Heart right ventricle (tissue), 16 donors: ENCODE measurements at regions of chr18 and their contacts with region 1.

Region 1: DNA sequence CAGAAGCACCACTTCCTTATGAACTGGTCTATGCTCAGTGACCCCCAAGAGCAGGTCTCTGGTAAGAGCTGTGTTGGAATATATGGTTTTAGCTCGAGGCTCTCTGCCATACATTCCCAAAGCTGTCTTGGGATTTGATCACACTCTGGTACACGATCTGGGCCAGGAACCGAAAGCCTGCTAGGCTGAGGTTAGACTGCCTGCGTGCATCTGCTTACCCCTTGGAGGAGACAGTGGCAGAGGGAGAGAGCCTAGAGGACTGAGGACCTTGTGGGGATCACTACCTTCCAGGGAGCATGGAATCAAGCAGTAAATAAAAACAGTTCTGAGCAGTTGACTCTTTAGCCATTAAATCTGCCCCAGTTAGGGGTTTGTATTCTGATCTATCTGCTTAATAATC is 63.7 kb downstream of the ZNF532 start:
- DNase-seq: no peak
- ATAC-seq: peak in 6 of 8 donors; percentile 44 to 64 (median 52)
- H3K4me3 ChIP-seq: no peak overlapping the region
- H3K27ac ChIP-seq: peak overlapping the region in 9 of 10 donors; percentile 51 to 83 (median 61)
- H3K4me1 ChIP-seq: peaks cover 2 to 45% (median 32%) of the 10 kb centered on the region in 9 donors
- H3K27me3 ChIP-seq: no peaks in the 10 kb centered on the region
- CTCF ChIP-seq: no peak

Region 2: GRCh38 chr18:58980991-58981390 is 52.6 kb after region 1 on chr18:
- intact Hi-C with region 1: loop called in 1 of 10 experiments (anchors 10 kb)
- DNase-seq: no peak
- ATAC-seq: no peak
- H3K4me3 ChIP-seq: no peak overlapping the region
- H3K27ac ChIP-seq: no peak overlapping the region
- H3K4me1 ChIP-seq: peaks cover 0 to 18% (median 0%) of the 10 kb centered on the region in 9 donors
- H3K27me3 ChIP-seq: no peaks in the 10 kb centered on the region
- CTCF ChIP-seq: no peak